PC-3 (cell line): ENCODE measurements at regions of chr6 and their contacts with region 1.

Region 1: DNA sequence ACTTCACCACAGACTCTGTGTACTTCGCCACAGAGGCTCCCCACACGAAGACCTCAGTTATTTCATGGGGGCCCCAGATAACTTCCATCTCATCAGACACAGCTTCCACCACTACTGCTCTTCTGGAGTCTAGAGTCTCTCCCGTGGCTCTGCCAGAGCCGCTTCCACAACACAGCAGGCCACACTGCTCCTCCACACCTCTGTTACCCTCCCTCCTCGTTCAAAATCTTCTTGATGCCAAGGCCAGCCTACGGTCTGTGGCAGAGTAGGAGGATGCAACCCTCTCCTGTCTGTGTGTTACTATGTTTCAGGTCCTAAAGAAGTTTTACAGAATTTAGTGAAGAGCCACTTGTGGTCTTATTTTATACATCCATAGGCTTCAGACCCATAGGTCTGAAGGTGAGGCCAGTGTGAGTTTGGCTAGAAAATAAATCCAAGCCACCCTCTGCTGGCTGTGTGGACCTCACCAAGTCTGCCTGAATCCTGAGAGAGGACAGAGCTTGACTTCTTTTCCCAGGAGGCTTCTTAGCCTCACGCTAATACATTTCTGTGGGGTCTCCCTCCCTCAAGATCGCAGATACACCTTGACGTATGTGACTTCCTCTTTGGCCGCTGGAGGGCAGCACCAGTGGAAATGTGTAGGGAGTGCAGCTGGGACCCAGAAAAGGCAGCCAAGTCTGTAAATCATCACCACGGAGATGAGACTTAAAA is 197.7 kb downstream of the FAXC start:
- DNase-seq: peak; percentile 60
- ATAC-seq: peak; percentile 73
- H3K4me3 ChIP-seq: no peak overlapping the region
- H3K27ac ChIP-seq: no peak overlapping the region
- H3K4me1 ChIP-seq: no peaks in the 10 kb centered on the region
- H3K27me3 ChIP-seq: peaks cover 30% of the 10 kb centered on the region
- CTCF ChIP-seq: peak; percentile 70

Region 2: DNA sequence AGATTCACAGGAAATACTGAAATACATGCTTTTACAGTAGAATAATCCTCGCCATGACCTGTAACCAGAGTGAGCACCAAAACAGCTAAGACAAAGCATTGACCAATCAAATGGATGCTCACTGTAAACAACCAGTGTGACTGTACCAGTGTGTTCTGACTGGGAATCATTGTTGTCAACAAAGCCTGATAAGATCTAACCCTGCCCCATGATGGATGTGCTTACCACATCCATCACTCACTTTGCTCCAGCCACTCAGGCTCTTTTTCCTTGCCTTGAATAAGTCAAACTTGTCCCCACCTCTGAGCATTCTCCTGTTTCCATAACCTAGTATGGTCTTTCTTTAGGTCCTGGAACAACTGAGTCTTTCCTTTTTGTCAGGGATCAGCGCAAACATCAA is 50.4 kb before region 1 on chr6:
- CTCF ChIA-PET with region 1: no interaction called
- POLR2A ChIA-PET with region 1: no interaction called
- intact Hi-C with region 1: no loop called
- DNase-seq: no peak
- ATAC-seq: no peak
- H3K4me3 ChIP-seq: no peak overlapping the region
- H3K27ac ChIP-seq: no peak overlapping the region
- H3K4me1 ChIP-seq: no peaks in the 10 kb centered on the region
- H3K27me3 ChIP-seq: peaks cover 13% of the 10 kb centered on the region; the same call in 1 of the 2 replicates
- CTCF ChIP-seq: no peak

Region 3: GRCh38 chr6:99165838-99166237 is 14.0 kb after region 1 on chr6:
- CTCF ChIA-PET with region 1: no interaction called
- POLR2A ChIA-PET with region 1: no interaction called
- intact Hi-C with region 1: no loop called
- DNase-seq: no peak
- ATAC-seq: no peak
- H3K4me3 ChIP-seq: no peak overlapping the region
- H3K27ac ChIP-seq: no peak overlapping the region
- H3K4me1 ChIP-seq: no peaks in the 10 kb centered on the region
- H3K27me3 ChIP-seq: peaks cover 3% of the 10 kb centered on the region; the same call in 1 of the 2 replicates
- CTCF ChIP-seq: no peak

Region 4: DNA sequence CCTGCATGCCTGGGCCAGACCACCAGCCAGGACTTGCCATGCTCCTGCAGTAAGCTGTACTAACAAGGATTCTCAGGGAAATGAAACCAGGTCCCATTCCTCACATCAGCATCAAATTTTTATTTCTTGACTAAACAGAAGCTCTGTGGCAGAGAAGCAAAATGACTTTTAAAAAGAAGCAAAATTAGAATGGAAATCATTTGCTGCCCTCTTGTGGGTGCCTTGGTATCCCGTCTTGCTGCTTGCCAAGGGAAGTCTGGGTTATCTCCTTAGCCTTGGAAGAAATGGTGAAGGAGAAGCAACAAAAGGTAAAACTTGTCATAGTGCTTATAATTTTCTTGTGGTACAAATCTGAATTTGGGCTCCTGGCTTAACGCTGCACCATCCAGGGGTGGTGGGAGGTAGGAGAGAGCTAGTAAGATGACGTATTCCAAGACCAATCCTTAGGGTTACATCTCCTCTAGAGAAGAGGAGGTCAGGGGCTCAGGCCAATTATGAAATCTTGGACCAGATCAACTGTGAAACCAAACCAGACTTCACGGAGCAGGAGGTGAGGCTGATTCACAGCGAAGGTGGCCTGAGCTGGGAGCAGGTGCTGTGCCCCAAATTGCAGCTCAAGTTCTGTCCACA is 90.2 kb after region 1 on chr6:
- CTCF ChIA-PET with region 1: interaction called, 17 read pairs
- POLR2A ChIA-PET with region 1: no interaction called
- intact Hi-C with region 1: loop called (anchors 1 kb)
- DNase-seq: peak; percentile 55
- ATAC-seq: peak; percentile 56; the same call in 1 of the 2 replicates
- H3K4me3 ChIP-seq: no peak overlapping the region
- H3K27ac ChIP-seq: no peak overlapping the region
- H3K4me1 ChIP-seq: no peaks in the 10 kb centered on the region
- H3K27me3 ChIP-seq: peaks cover 37% of the 10 kb centered on the region; the same call in 1 of the 2 replicates
- CTCF ChIP-seq: peak; percentile 59